Posterior vena cava (tissue), 2 donors: ENCODE measurements at regions of chr3 and their contacts with region 1.

Region 1: DNA sequence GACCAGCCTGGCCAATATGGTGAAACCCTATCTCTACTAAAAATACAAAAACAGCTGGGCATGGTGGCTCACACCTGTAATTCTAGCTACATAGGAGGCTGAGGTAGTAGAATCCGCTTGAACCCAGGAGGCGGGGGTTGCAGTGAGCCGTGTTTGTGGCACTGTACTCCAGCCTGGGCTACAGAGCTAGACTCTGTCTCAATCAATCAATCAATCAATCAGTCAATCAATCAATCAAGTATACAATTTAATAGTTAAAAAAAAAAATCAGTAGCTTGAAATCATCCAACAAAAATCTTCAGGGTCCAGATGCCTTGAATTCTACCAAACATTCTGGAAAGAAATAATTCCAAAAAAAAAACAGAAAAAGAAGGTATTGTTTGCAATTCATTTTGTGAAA is 196.7 kb downstream of the STAG1 start:
- DNase-seq: no peak

Region 2: GRCh38 chr3:135597855-135598254 is 957.6 kb before region 1 on chr3:
- intact Hi-C with region 1: no loop called
- DNase-seq: no peak

Region 3: DNA sequence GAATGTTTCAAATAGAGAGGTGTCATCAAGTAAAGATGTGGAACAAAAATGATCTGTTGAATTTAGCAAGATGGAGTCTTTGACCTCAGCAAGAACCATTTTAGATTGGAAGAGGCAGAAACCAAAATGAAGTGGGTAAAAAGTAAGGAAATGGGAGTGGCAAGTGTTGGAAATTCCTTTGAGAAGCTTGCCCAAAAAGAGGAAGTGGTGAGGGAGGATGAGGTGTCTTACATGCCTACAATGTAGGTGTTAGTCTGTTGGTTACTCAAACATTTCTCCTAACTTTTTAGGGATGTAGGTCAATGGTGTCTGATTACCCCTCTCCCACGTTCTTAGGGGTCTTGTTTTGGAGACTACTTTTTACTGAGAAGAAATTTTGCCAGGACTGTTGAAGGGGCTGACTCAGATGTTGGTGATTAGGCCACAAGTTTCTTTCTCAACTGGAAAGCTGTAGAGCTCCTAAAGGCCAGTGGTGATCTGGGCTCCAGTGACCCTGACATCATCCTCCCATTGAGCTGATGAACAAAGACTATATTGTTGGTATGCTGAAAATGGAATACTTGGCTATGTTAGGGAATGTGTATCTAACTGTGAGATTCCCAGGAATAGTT is 584.9 kb before region 1 on chr3:
- intact Hi-C with region 1: no loop called
- DNase-seq: no peak

Region 4: DNA sequence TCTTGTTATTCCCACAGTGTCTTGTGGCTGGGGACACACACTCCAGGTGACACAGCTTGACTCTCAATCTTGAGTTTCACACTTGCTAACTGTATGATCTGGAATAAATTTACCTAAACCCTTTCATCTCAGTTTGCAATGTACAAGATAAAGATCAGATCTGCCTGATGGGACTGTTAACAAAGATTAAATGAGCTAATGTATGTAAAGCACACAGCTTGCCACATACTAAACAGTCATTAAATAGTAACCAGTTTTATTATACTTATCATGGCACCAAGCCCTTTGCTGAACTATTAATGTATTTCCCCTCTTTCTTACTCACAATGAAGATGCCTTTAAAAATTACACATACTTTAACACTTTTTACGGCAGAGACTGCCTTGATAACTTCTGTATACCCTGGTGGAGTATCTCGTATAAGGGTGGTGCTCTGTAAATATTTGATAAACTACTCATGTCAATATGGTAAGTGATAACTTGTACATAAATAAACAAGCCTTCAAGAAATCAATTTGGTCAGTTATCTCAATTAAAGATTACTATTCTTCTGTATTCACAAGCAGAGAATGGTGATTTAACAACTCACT is 12.2 kb after region 1 on chr3:
- intact Hi-C with region 1: loop called in 1 of 2 experiments (anchors 1 kb)
- DNase-seq: no peak